ENCODE measurements at regions of chr17 and their contacts with region 1.

Region 1: GRCh38 chr17:38702166-38702899 is 2.7 kb upstream of the MLLT6 start:
- DNase-seq: peak; percentile 74
- H3K4me3 Mint-ChIP-seq: peak overlapping the region; percentile 96
- H3K27ac Mint-ChIP-seq: peak overlapping the region; percentile 99
- H3K4me1 Mint-ChIP-seq: peaks cover 46% of the 10 kb centered on the region
- H3K27me3 Mint-ChIP-seq: no peaks in the 10 kb centered on the region

Region 2: DNA sequence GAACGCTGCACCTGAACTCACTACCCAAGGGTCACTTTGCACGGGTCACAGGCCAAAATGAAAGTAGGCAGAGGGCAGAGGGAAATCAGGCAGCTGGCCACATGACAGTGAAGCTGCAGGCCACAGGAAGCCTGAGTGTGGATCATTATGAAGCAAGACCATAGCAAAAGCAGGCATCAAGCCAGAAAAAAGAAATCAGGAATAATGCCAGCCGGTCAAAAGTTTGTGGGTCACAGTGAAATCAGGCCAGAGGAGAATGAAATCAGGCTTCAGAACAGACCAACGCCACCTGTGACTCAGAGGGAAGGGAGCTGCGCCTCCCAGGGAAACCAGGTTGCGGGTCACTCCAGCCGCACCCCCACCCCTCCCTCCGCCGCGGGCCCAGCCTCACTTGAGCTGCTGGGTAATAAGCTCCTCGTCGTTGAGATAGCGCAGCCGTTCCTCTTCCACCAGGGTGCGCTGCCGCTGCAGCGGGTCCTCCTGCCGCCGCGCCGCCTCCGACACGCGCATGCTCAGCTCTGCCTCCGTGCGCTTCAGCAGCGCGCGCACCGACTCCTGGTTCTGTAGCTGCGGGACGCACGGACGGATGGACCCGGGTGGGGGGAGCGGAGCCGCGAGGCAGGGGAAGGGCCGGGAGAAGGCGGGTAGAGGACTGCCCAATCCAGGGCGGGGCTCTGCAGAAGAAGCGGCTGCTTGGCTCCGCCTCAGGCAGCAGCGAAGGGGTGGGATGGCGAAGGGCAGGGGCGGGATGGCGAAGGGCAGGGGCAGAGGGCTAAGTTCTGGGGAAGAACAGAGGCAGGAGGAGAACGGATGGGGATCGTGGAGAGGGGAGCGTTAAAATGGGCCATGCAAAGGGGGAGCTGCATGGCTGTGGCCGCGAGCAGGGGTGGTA is 144.3 kb before region 1 on chr17:
- intact Hi-C with region 1: loop called (anchors 1 kb)
- DNase-seq: peak; percentile 86
- H3K4me3 Mint-ChIP-seq: peak overlapping the region; percentile 84
- H3K27ac Mint-ChIP-seq: no peak overlapping the region
- H3K4me1 Mint-ChIP-seq: peaks cover 20% of the 10 kb centered on the region
- H3K27me3 Mint-ChIP-seq: peaks cover 51% of the 10 kb centered on the region

Region 3: GRCh38 chr17:38674749-38675615 is 27.4 kb before region 1 on chr17 and contains the start of gene EPOP:
- intact Hi-C with region 1: loop called (anchors 1 kb)
- DNase-seq: peak; percentile 88
- H3K4me3 Mint-ChIP-seq: peak within 1 kb of the TSS; percentile 57
- H3K27ac Mint-ChIP-seq: peak within 1 kb of the TSS; percentile 70
- H3K4me1 Mint-ChIP-seq: peaks cover 37% of the 10 kb centered on the region
- H3K27me3 Mint-ChIP-seq: peaks cover 19% of the 10 kb centered on the region
- total RNA-seq, gene EPOP: 34.9 TPM in 2 replicates

Region 4: GRCh38 chr17:38719289-38719942 is 17.1 kb after region 1 on chr17:
- intact Hi-C with region 1: no loop called
- DNase-seq: no peak
- H3K4me3 Mint-ChIP-seq: no peak overlapping the region
- H3K27ac Mint-ChIP-seq: no peak overlapping the region
- H3K4me1 Mint-ChIP-seq: peaks cover 19% of the 10 kb centered on the region
- H3K27me3 Mint-ChIP-seq: no peaks in the 10 kb centered on the region

Region 5: GRCh38 chr17:38729886-38730525 is 27.7 kb after region 1 on chr17 and contains the start of gene CISD3:
- intact Hi-C with region 1: loop called (anchors 1 kb)
- DNase-seq: peak; percentile 84
- H3K4me3 Mint-ChIP-seq: peak within 1 kb of the TSS; percentile 89
- H3K27ac Mint-ChIP-seq: peak within 1 kb of the TSS; percentile 86
- H3K4me1 Mint-ChIP-seq: peaks cover 71% of the 10 kb centered on the region
- H3K27me3 Mint-ChIP-seq: no peaks in the 10 kb centered on the region
- total RNA-seq, gene CISD3: 32.2 and 37.0 TPM in 2 replicates

Region 6: GRCh38 chr17:38777641-38778250 is 75.4 kb after region 1 on chr17:
- intact Hi-C with region 1: no loop called
- DNase-seq: no peak
- H3K4me3 Mint-ChIP-seq: no peak overlapping the region
- H3K27ac Mint-ChIP-seq: no peak overlapping the region
- H3K4me1 Mint-ChIP-seq: no peaks in the 10 kb centered on the region
- H3K27me3 Mint-ChIP-seq: no peaks in the 10 kb centered on the region

Region 7: GRCh38 chr17:38824899-38825761 is 122.8 kb after region 1 on chr17 and contains the start of gene CWC25:
- intact Hi-C with region 1: loop called (anchors 1 kb)
- DNase-seq: peak; percentile 97
- H3K4me3 Mint-ChIP-seq: peak within 1 kb of the TSS; percentile 98
- H3K27ac Mint-ChIP-seq: peak within 1 kb of the TSS; percentile 99
- H3K4me1 Mint-ChIP-seq: peaks cover 20% of the 10 kb centered on the region
- H3K27me3 Mint-ChIP-seq: no peaks in the 10 kb centered on the region
- total RNA-seq, gene CWC25: 23.0 and 26.4 TPM in 2 replicates

Region 8: DNA sequence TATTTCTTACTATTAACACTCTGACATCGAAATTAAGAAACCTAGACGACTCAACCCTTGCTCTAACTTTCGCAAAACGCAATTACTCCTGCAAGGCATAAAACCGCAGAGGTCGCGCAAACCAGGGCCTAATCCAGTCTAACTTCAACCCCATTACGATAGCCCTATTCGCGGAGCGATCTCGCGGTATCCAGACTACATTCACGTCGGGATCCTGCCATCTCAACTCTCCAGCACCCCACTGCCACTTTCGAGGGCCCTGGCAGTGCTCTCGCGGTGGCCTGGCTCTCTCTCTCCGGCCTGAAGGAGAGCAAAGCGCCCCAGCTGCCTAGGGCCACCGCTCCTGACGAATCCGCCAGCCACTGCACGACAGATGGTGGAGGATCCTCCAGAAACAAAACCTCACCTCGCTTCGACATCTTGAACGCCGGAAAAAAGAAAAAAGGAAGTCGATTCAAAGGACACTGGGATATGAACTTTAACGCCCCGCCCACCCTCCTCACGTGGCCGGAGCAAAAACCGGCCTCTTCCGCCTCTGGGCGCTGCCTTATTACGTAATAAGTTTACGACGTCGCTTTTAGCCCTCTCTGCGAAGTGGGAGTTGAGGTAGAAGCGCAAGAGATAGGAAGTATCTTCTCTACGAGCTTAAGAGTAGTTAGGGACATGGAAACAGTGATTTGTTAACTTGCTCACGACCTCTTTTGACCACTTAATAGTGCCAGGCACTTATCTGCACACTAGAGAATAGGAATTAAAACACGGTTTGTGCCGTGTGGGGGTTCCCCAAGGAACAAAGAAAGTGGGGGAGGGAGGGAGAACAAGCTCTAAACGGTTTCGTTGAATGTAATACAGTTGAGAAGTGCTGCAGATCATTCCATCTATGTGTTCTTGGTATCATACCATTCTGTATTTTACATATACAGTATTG is 151.2 kb after region 1 on chr17 and contains the start of gene RPL23:
- intact Hi-C with region 1: loop called (anchors 5 kb)
- DNase-seq: peak; percentile 90
- H3K4me3 Mint-ChIP-seq: peak within 1 kb of the TSS; percentile 98
- H3K27ac Mint-ChIP-seq: peak within 1 kb of the TSS; percentile 98
- H3K4me1 Mint-ChIP-seq: peaks cover 26% of the 10 kb centered on the region
- H3K27me3 Mint-ChIP-seq: no peaks in the 10 kb centered on the region
- total RNA-seq, gene RPL23: 1,775 and 1,796 TPM in 2 replicates

Measured in activated T-helper 2 cell treated with anti-CD3 and anti-CD28 coated beads, Interferon-gamma antibody, Interleukin-2, Interleukin-4, amounts not matched to agents 10 μg/mL and 5 μg/mL and 100 μg/mL, durations not matched to agents 14 hours and 24 hours and 36 hours (primary cell).